HCT116 (cell line): ENCODE measurements at regions of chr17 and their contacts with region 1.

Region 1: DNA sequence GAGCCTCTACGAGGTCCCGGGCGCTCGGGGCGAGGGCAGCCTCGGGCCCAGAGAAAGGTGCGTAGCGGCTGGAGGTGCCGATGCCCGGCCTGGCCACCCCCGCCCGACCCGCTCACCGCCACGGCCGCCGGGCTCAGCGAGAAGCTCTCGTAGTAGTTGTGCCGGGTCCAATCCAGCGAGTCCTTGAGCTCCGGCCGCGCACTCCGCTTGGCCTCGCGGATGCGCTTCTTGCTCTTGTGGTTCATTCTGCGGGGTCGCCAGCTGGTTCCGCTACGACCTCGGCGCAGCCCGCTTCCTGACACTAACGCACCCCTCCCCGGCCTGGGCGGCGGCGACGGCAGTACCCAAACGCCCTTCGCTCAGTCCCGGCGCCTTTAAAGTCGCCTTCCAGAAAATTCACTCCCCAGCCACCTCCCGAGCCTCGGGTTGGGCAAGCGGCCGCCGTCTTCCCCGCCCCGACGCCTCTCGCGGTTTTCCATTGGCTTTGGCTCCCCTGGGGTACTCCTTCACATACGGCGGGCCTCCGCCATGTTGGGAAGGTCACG is at the start of gene JMJD6:
- DNase-seq: peak; percentile 97
- ATAC-seq: peak; percentile 90
- H3K4me3 ChIP-seq: peak within 1 kb of the TSS; percentile 97
- H3K27ac ChIP-seq: peak within 1 kb of the TSS; percentile 99
- H3K4me1 ChIP-seq: peaks cover 13 to 21% of the 10 kb centered on the region in 2 experiments
- H3K27me3 ChIP-seq: no peaks in the 10 kb centered on the region
- CTCF ChIP-seq: no peak
- POLR2A ChIP-seq: peak; percentile 39
- RAD21 ChIP-seq: no peak
- total RNA-seq, gene JMJD6: 47.6 TPM

Region 2: DNA sequence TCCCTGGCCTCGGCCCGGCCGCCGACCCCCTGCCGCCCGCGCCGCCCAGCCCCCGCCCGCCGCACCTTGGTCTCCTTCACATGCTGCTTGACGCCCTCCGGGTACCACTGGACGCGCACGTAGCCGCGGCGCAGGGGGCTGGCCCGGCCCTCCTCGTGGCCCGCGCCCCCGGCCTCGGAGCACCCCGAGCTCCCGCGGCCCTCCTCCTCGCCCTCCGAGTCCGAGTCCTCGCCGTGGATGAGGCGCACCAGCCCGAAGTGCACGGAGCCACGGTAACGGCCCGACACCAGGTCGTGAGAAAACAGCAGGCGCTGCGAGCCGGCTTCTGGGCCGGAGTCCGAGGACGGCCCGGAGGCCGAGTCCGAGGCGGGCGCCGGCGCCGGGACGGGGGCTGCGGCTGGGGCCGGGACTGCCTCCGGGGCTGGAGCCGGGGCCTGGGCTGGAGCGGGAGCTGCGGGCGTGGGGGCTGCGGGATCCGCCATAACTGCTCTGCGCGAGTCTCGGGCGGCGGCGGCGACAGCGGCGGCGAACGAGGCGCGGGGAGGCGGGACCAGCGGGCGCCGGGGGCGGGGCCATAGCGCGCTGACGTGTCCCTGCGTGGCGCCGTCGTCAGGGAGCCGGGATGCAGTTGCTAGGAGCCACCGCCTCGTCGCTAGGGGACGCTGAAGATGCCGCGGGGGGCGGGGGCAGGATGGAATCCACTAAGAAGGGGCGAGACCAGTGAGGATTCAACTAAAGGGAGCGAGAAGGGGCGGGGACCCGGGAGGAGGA is 273.5 kb before region 1 on chr17 and contains the start of gene UBE2O:
- CTCF ChIA-PET with region 1: no interaction called
- POLR2A ChIA-PET with region 1: no interaction called
- RAD21 ChIA-PET with region 1: interaction called in 1 of 2 experiments, 10 read pairs
- intact Hi-C with region 1: no loop called
- DNase-seq: peak; percentile 86
- ATAC-seq: peak; percentile 95
- H3K4me3 ChIP-seq: peak within 1 kb of the TSS; percentile 89 to 96
- H3K27ac ChIP-seq: peak within 1 kb of the TSS; percentile 89
- H3K4me1 ChIP-seq: peaks cover 23 to 41% of the 10 kb centered on the region in 2 experiments
- H3K27me3 ChIP-seq: no peaks in the 10 kb centered on the region
- CTCF ChIP-seq: peak in 1 of 3 experiments; percentile 41; a peak in 2 of 6 replicates
- POLR2A ChIP-seq: peak; percentile 52
- RAD21 ChIP-seq: no peak
- total RNA-seq, gene UBE2O: 59.1 TPM

Region 3: DNA sequence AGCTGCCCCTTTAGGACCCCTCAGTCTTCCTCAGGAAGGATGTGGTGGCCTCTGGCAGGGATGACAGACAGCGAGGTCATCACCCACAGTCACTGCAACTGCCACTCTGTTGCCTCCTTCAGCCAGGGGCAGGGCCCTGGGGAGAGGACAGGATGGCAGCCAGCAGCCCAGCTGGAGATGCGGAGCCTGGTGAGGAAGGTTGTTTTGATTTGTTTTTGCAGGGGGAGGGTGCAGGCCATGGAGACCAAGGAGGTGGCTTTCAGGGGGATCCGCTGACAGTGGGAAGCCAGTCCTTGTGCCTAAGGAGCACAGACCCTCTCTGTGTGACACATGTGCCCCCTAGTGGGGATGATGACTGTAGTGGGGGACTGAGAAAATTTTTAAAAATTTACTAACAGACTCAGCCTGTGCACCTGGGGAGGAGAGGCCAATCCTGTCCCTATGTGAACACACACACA is 179.1 kb before region 1 on chr17:
- CTCF ChIA-PET with region 1: no interaction called
- POLR2A ChIA-PET with region 1: no interaction called
- RAD21 ChIA-PET with region 1: no interaction called
- intact Hi-C with region 1: no loop called
- DNase-seq: no peak
- ATAC-seq: peak; percentile 96
- H3K4me3 ChIP-seq: no peak overlapping the region
- H3K27ac ChIP-seq: no peak overlapping the region
- H3K4me1 ChIP-seq: peaks cover 0 to 13% of the 10 kb centered on the region in 2 experiments; a peak in 2 of 4 replicates
- H3K27me3 ChIP-seq: no peaks in the 10 kb centered on the region
- CTCF ChIP-seq: peak; percentile 80 to 92 (median 90)
- POLR2A ChIP-seq: no peak
- RAD21 ChIP-seq: peak; percentile 92

Region 4: DNA sequence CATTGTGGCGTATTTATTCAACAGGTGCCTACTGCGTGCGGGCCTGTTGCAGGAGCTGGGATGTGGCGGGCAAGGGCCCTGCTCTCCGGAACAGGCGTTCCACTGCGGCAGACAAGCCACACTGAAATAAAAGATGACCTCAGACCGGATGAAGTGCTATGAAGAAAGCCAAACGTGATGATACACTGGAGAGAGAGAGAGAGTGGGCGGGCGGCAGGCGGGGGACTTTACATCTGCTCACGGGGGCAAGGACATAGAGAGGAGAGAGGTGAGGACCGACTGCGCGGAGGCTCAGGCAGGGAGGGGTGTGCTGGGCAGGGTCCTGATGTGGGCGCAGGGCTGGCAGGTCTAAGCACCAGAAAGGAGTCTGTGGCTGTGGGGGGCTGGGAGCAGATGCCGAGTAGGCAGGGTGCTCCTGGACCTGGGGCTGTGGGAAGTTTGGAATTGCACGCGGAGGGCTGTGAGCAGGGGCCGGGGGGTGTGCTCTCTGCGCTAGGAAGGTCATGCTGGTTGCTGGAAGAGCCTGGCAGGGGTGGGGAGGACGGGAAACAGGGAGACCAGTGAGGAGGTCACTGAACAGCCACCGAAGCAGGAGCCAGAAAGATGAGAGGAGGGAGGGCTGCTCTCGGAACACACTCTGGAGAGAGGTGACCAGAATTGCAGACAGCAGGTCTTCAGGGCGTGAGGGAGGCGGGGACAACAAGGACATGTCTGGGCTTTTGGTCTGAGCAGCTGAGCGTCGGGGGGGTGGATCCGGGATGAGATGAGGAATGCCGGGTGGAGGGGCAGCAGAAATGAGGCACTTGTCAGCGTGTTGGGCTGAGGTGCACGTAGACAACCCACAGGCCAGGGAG is 25.5 kb before region 1 on chr17:
- CTCF ChIA-PET with region 1: no interaction called
- POLR2A ChIA-PET with region 1: no interaction called
- RAD21 ChIA-PET with region 1: no interaction called
- intact Hi-C with region 1: no loop called
- DNase-seq: no peak
- ATAC-seq: no peak
- H3K4me3 ChIP-seq: no peak overlapping the region
- H3K27ac ChIP-seq: no peak overlapping the region
- H3K4me1 ChIP-seq: peaks cover 0 to 12% of the 10 kb centered on the region in 2 experiments; a peak in 2 of 4 replicates
- H3K27me3 ChIP-seq: no peaks in the 10 kb centered on the region
- CTCF ChIP-seq: no peak
- POLR2A ChIP-seq: no peak
- RAD21 ChIP-seq: no peak

Region 5: DNA sequence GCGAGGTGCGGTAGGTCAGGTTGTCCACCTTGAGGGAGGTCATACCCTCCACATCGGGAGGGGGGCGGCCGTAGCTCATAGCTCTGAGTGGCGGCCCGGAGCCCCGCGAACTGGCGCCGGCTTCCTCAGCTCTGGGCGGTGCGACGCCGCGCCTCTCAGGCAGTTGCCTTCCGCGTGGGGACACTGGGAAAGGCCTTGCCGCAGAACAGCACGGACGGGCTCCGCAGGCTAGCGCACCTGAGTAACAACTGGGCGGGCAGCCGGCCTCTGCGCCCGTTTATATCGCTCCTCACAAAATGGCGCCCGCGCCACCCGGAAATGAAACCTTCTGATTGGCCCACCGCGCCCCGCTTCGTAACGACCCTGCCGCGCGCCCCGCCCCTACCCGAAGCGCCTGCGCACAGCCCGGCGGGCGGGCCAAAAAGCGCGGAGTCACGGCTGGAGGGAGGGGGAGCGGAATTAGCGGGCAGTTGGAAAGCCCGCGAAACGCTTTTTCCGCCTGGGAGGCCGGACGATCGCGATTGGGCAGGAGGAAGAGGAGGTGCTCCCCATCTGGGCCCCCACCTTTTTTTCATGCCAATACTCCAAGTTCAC is 10.9 kb after region 1 on chr17 and contains the start of gene SRSF2:
- CTCF ChIA-PET with region 1: interaction called, 6 read pairs
- POLR2A ChIA-PET with region 1: interaction called, 27 read pairs
- RAD21 ChIA-PET with region 1: no interaction called
- intact Hi-C with region 1: loop called (anchors 1 kb)
- DNase-seq: peak; percentile 97
- ATAC-seq: peak; percentile 78
- H3K4me3 ChIP-seq: peak within 1 kb of the TSS; percentile 71 to 91
- H3K27ac ChIP-seq: peak within 1 kb of the TSS; percentile 92
- H3K4me1 ChIP-seq: peaks cover 16 to 34% of the 10 kb centered on the region in 2 experiments
- H3K27me3 ChIP-seq: no peaks in the 10 kb centered on the region
- CTCF ChIP-seq: no peak
- POLR2A ChIP-seq: peak; percentile 100
- RAD21 ChIP-seq: no peak
- total RNA-seq, gene SRSF2: 422 TPM

Region 6: GRCh38 chr17:78517421-78517820 is 1791.1 kb after region 1 on chr17:
- CTCF ChIA-PET with region 1: no interaction called
- POLR2A ChIA-PET with region 1: no interaction called
- RAD21 ChIA-PET with region 1: no interaction called
- intact Hi-C with region 1: no loop called
- DNase-seq: no peak
- ATAC-seq: no peak
- H3K4me3 ChIP-seq: no peak overlapping the region
- H3K27ac ChIP-seq: no peak overlapping the region
- H3K4me1 ChIP-seq: no peaks in the 10 kb centered on the region
- H3K27me3 ChIP-seq: no peaks in the 10 kb centered on the region
- CTCF ChIP-seq: no peak
- POLR2A ChIP-seq: no peak
- RAD21 ChIP-seq: no peak